ENCODE measurements at regions of chr7 and their contacts with region 1.

Region 1: DNA sequence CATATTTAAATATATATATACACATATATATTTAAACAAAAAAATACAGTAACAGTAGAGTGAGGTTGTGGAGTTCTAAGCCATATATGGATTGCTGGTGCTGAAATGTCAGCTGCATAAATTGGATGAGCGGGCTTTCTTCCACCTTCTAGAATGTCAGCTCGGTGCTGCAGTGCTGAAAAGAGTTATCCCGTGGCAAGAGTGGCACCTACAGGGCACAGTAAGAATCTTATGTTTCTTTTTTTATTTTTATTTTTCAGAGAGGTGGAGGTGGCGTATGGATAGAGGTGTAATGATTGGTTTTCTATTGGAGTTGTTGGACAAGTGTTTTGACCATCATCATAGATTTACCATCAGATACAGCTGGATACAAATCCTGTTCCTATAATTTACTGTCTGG is 86.2 kb upstream of the DYNC1I1 start:
- DNase-seq: peak; percentile 60 to 81 (median 74)
- H3K4me3 ChIP-seq: no peak overlapping the region
- H3K27ac ChIP-seq: no peak overlapping the region
- H3K4me1 ChIP-seq: peaks cover 0 to 26% of the 10 kb centered on the region in 2 donors
- H3K27me3 ChIP-seq: no peaks in the 10 kb centered on the region
- CTCF ChIP-seq: peak; percentile 42 to 88 (median 70)
- POLR2A ChIP-seq: no peak

Region 2: DNA sequence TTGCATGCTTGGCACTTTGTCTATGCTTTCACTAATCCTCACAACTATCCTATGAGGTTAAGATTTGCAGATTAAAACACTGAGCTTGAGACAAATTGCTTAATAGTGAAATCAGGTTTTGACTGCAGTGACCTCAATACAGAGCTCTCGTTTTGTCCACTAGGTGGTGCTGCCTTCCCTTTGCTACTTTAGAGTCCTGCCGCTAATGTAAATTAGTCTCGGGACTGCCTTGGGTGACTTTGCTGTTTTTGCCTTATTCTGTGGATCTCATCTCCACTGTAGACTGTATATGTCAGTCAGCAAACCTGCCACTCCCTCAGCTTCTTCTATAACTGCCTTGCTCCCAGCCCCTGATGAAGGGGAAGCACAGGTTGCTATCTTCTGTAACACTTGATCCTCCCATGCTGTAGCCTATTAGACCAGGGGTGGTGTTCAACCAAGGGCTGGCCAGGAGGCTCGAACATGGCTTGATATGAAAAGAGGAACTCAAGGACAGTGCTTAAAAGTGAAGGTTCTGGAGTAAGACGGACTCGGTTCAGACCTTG is 174.3 kb before region 1 on chr7:
- intact Hi-C with region 1: loop called in 1 of 2 experiments (anchors 5 kb)
- DNase-seq: peak; percentile 82 to 95 (median 86)
- H3K4me3 ChIP-seq: no peak overlapping the region
- H3K27ac ChIP-seq: peak overlapping the region in 3 of 5 donors; percentile 44 to 75 (median 62)
- H3K4me1 ChIP-seq: peaks cover 0 to 36% of the 10 kb centered on the region in 2 donors
- H3K27me3 ChIP-seq: no peaks in the 10 kb centered on the region
- CTCF ChIP-seq: peak; percentile 91 to 95 (median 92)
- POLR2A ChIP-seq: peak in 1 of 2 donors; percentile 16

Region 3: GRCh38 chr7:95527033-95527775 is 158.9 kb before region 1 on chr7:
- intact Hi-C with region 1: loop called (anchors 5 kb)
- DNase-seq: peak; percentile 60 to 80 (median 74)
- H3K4me3 ChIP-seq: no peak overlapping the region
- H3K27ac ChIP-seq: peak overlapping the region in 4 of 5 donors; percentile 2 to 74 (median 57)
- H3K4me1 ChIP-seq: peaks cover 22 to 63% of the 10 kb centered on the region in 2 donors
- H3K27me3 ChIP-seq: no peaks in the 10 kb centered on the region
- CTCF ChIP-seq: peak; percentile 79 to 96 (median 92)
- POLR2A ChIP-seq: no peak

Region 4: DNA sequence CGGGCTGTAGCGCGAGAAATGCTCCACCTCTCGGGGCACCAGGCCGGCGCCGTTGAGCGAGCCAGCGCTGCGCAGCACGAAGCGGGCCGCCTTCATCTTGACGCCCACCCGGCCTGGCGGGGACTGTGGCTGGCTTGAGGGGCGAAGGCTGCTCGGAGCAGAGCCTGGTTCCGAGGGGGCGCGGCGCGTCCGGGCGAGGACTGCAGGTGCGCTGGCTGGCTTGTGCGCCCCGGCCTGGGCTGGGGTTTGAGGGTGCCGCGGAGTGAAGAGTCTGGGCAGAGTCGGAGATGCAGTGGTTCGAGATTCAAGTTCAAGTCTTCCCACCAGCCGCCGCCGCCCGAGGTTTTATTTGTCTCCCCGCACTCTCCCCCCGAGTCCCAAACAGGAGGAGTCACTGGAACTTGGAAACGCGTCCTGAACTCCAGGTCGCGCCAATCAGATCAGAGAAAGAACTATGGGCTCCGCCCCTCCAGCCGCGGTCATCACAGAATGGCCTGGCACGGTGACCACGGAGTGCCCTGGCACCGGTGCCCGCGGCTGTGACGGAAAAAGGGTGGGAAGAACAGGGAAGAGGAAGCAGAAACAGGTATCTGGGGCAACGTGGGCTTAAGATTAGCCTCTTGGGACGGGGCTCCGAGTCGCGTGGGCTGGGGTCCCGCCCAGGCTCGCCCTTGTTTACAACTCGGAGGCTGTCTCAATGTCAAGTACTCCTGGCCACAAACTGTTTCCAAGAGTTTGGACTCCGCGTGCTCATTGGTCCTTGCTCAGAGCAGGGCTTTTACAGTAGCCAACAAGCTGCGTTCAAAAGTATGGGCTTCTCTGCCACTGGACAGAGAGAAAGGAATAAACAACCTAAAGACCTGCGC is 89.7 kb before region 1 on chr7 and contains the start of gene PDK4:
- intact Hi-C with region 1: loop called (anchors 5 to 10 kb)
- DNase-seq: peak; percentile 96 to 99 (median 98)
- H3K4me3 ChIP-seq: peak within 1 kb of the TSS; percentile 24 to 88 (median 74)
- H3K27ac ChIP-seq: peak within 1 kb of the TSS; percentile 81 to 99 (median 95)
- H3K4me1 ChIP-seq: peaks cover 15 to 48% of the 10 kb centered on the region in 2 donors
- H3K27me3 ChIP-seq: no peaks in the 10 kb centered on the region
- CTCF ChIP-seq: peak in 1 of 6 experiments; percentile 10
- POLR2A ChIP-seq: peak; percentile 96
- total RNA-seq, gene PDK4: 60.1 to 690 (median 417) TPM

Region 5: GRCh38 chr7:95608359-95609173 is 77.5 kb before region 1 on chr7:
- intact Hi-C with region 1: loop called in 1 of 2 experiments (anchors 10 kb)
- DNase-seq: peak; percentile 86 to 98 (median 96)
- H3K4me3 ChIP-seq: peak overlapping the region in 1 of 4 donors; percentile 39
- H3K27ac ChIP-seq: peak overlapping the region; percentile 81 to 99 (median 92)
- H3K4me1 ChIP-seq: peaks cover 33 to 61% of the 10 kb centered on the region in 2 donors
- H3K27me3 ChIP-seq: no peaks in the 10 kb centered on the region
- CTCF ChIP-seq: no peak
- POLR2A ChIP-seq: peak in 1 of 2 donors; percentile 69